Activated CD4-positive, alpha-beta T cell treated with anti-CD3 and anti-CD28 coated beads for 36 hours (primary cell): ENCODE measurements at regions of chr2 and their contacts with region 1.

Region 1: DNA sequence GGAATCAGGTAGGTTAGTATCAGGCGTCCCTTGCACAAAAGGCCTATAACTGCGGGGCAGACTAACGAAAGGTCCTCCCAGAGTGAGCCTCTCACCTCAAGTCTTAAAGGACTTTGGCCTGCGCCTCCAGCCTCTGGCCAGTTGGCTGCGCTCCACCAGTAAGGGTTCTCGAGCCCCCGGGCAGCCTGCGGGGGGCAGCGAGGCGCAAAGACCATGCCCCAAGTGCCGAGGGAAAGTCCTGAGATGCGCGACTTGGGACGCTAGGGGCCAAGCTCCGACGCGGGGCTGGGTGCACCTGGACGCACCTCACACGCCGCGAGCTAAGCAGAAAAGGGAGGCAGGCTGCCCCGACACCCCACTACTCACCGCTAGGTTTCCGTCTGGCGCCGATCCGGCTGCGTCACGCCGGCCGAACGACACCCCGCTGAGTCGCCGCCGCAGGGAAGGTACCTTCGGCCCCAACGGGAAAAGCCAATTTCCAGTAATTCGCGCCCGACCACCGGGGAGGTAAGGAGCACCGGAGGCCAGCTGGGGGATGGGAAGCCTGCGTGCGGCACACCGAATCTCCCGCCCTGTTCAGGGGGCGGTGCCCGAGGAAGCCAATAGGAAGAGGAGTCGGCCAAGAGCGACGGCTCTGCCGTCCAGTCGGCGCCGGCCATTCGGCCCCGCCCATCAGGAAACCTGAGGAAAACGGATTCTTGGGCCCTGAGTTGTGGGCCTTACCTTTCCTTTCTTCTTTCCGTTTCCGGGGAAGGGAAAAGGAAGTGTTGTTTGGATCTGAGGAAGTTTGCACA is at the start of gene ORC2:
- DNase-seq: peak; percentile 95
- ATAC-seq: peak; percentile 95
- H3K4me3 Mint-ChIP-seq: peak within 1 kb of the TSS; percentile 92
- H3K27ac Mint-ChIP-seq: peak within 1 kb of the TSS; percentile 96
- H3K4me1 Mint-ChIP-seq: peaks cover 65% of the 10 kb centered on the region
- H3K27me3 Mint-ChIP-seq: no peaks in the 10 kb centered on the region
- total RNA-seq, gene ORC2: 68.5 to 80.5 TPM

Region 2: DNA sequence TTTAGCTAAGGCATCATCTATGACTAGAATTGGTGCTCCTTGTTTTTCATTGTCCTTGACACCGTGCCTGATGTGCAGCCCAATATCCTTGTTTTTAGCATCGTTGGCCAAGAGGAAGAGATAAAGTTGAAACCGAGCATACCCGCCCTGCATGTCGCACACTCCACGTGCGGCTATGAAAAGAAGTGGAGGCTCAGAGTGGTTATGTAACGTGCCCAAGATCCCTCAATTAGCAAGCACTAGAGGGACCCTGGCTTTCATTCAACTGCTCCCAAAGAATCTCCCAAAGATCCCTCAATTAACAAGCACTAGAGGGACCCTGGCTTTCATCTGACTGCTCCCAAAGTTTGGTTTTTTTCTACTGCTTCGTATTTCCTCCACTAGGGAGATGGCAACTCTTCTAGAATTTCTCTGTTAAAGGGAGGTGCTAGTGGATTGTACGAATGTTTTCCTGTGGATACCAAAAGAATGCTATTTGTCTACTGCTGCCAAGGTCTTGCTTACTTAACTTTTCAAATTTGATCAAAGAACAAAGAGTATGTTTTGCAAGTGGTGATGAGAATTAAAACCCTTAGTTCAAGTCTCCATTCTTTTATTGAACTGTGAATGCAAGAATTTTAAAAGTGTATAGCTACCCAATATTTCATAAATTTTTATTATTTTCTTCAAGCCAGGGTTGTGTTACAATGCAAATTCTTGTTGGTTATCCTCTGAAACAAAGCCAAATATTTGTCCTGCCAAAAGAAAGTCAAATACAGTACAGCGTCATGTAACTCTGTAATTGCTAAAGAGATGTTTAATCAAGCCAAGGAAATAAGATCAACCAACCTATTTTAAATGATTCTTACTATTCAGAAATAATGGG is 285.4 kb before region 1 on chr2:
- CTCF ChIA-PET with region 1: no interaction called
- POLR2A ChIA-PET with region 1: no interaction called
- intact Hi-C with region 1: no loop called
- DNase-seq: no peak
- ATAC-seq: no peak
- H3K4me3 Mint-ChIP-seq: no peak overlapping the region
- H3K27ac Mint-ChIP-seq: no peak overlapping the region
- H3K4me1 Mint-ChIP-seq: peaks cover 8% of the 10 kb centered on the region
- H3K27me3 Mint-ChIP-seq: no peaks in the 10 kb centered on the region

Region 3: GRCh38 chr2:200829258-200829655 is 134.1 kb before region 1 on chr2:
- CTCF ChIA-PET with region 1: no interaction called
- POLR2A ChIA-PET with region 1: no interaction called
- intact Hi-C with region 1: no loop called
- DNase-seq: no peak
- ATAC-seq: no peak
- H3K4me3 Mint-ChIP-seq: no peak overlapping the region
- H3K27ac Mint-ChIP-seq: no peak overlapping the region
- H3K4me1 Mint-ChIP-seq: no peaks in the 10 kb centered on the region
- H3K27me3 Mint-ChIP-seq: no peaks in the 10 kb centered on the region

Region 4: GRCh38 chr2:200888704-200889625 is 74.4 kb before region 1 on chr2 and contains the starts of genes NIF3L1 and PPIL3:
- CTCF ChIA-PET with region 1: interaction called, 4 read pairs
- POLR2A ChIA-PET with region 1: interaction called, 8 read pairs
- intact Hi-C with region 1: loop called (anchors 1 kb)
- DNase-seq: peak; percentile 99
- ATAC-seq: peak; percentile 83
- H3K4me3 Mint-ChIP-seq: peak within 1 kb of the TSS; percentile 98
- H3K27ac Mint-ChIP-seq: peak within 1 kb of the TSS; percentile 100
- H3K4me1 Mint-ChIP-seq: peaks cover 46% of the 10 kb centered on the region
- H3K27me3 Mint-ChIP-seq: no peaks in the 10 kb centered on the region
- total RNA-seq, gene NIF3L1: 37.0 to 47.7 TPM
- total RNA-seq, gene PPIL3: 52.6 to 53.0 TPM

Region 5: DNA sequence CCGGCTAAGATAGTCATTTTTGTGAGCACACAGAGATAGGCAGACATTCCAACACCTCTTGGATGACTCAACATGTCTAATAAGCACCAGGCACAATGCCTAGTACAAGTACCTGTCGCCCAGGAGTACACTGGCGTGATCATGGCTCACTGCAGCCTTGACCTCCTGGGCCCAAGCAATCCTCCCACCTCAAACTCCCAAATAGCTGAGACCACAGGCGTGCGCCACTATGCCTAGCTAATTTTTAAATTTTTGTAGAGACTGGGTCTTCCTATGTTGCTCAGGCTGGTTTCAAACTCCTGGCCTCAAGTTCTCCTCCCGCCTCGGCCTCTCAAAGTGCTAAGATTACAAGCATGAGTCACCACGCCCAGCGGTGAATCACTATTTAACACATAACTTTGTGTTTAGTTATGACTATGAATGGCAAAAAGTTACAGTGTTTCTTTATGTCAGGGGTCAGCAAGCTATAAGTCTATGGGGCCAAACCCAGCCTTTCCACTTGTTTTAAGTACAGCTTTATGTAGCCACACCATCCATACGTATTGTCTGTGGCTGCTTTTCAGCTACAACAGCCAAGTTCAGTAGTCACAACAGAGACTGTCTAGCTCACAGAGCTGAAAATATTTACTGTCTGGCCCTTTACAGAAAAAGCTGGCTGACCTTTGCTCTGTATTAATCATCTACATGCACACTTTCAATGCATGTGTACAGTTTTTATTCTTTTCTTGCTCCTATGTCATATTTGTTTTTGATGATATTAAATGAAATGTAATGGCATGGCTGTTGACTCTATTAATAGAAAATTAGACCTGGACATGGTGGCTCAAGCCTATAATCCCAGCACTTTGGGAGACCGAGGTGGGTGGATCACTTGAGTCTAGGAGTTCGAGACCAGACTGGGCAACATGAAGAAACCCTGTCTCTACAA is 18.6 kb before region 1 on chr2:
- CTCF ChIA-PET with region 1: interaction called, 16 read pairs
- POLR2A ChIA-PET with region 1: interaction called, 9 read pairs
- intact Hi-C with region 1: loop called in 1 of 2 experiments (anchors 1 kb)
- DNase-seq: peak; percentile 89
- ATAC-seq: peak; percentile 88
- H3K4me3 Mint-ChIP-seq: peak overlapping the region; percentile 18
- H3K27ac Mint-ChIP-seq: peak overlapping the region; percentile 49
- H3K4me1 Mint-ChIP-seq: peaks cover 27% of the 10 kb centered on the region
- H3K27me3 Mint-ChIP-seq: no peaks in the 10 kb centered on the region

Region 6: GRCh38 chr2:201071479-201072200 is 108.3 kb after region 1 on chr2 and contains the starts of genes HYCC2 and NDUFB3:
- CTCF ChIA-PET with region 1: interaction called, 29 read pairs
- POLR2A ChIA-PET with region 1: interaction called, 3 read pairs
- intact Hi-C with region 1: loop called (anchors 1 kb)
- DNase-seq: peak; percentile 95
- ATAC-seq: peak; percentile 94
- H3K4me3 Mint-ChIP-seq: peak within 1 kb of the TSS; percentile 97
- H3K27ac Mint-ChIP-seq: peak within 1 kb of the TSS; percentile 96
- H3K4me1 Mint-ChIP-seq: peaks cover 58% of the 10 kb centered on the region
- H3K27me3 Mint-ChIP-seq: no peaks in the 10 kb centered on the region
- total RNA-seq, gene HYCC2: 15.8 to 16.0 TPM
- total RNA-seq, gene NDUFB3: 126 to 150 TPM

Region 7: GRCh38 chr2:201182650-201183364 is 219.5 kb after region 1 on chr2 and contains the start of gene CASP10:
- CTCF ChIA-PET with region 1: interaction called, 10 read pairs
- POLR2A ChIA-PET with region 1: no interaction called
- intact Hi-C with region 1: loop called in 1 of 2 experiments (anchors 5 kb)
- DNase-seq: no peak
- ATAC-seq: peak; percentile 66
- H3K4me3 Mint-ChIP-seq: peak within 1 kb of the TSS; percentile 86
- H3K27ac Mint-ChIP-seq: peak within 1 kb of the TSS; percentile 96
- H3K4me1 Mint-ChIP-seq: peaks cover 43% of the 10 kb centered on the region
- H3K27me3 Mint-ChIP-seq: no peaks in the 10 kb centered on the region
- total RNA-seq, gene CASP10: 12.2 to 16.8 TPM

Region 8: GRCh38 chr2:202033321-202034248 is 1070.3 kb after region 1 on chr2 and contains the start of gene FZD7:
- CTCF ChIA-PET with region 1: no interaction called
- POLR2A ChIA-PET with region 1: no interaction called
- intact Hi-C with region 1: loop called in 1 of 2 experiments (anchors 5 kb)
- DNase-seq: peak; percentile 91
- ATAC-seq: peak; percentile 83
- H3K4me3 Mint-ChIP-seq: peak within 1 kb of the TSS; percentile 72
- H3K27ac Mint-ChIP-seq: peak within 1 kb of the TSS; percentile 22
- H3K4me1 Mint-ChIP-seq: peaks cover 13% of the 10 kb centered on the region
- H3K27me3 Mint-ChIP-seq: peaks cover 21% of the 10 kb centered on the region
- total RNA-seq, gene FZD7: 0.58 to 0.94 TPM